ENCODE measurements at regions of chr11 and their contacts with region 1.

Region 1: DNA sequence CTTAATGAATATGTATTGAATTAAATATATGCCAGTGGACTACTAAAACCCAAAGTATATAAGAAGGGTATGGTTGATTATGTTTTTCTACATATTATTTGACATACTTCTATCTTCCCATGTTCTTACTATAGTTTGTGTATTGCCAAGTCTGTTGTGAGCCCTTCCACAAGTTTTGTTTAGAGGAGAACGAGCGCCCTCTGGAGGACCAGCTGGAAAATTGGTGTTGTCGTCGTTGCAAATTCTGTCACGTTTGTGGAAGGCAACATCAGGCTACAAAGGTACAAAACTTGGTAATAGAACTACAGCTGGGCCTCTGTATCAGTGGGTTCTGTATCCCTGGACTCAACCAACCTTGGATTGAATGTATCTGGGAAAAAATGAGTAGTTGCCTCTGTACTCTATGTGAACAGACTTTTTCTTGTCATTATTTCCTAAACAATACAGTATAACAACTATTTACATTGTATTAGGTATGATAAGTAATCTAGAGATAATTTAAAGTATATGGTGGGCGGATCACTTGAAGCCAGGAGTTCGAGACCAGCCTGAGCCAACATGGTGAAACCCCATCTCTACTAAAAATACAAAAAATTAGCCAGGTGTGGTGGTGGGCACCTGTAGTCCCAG is 38.7 kb upstream of the TTC36 start:
- DNase-seq: peak; percentile 82
- CTCF ChIP-seq: peak; percentile 80

Region 2: GRCh38 chr11:118398791-118399559 is 89.6 kb before region 1 on chr11:
- in situ Hi-C with region 1: loop called (anchors 25 kb)
- DNase-seq: peak; percentile 20
- CTCF ChIP-seq: no peak

Region 3: GRCh38 chr11:119018074-119018938 is 529.7 kb after region 1 on chr11 and contains the starts of genes RPS25 and TRAPPC4:
- in situ Hi-C with region 1: no loop called
- DNase-seq: peak; percentile 96
- CTCF ChIP-seq: no peak